HEK293 (cell line): ENCODE measurements at regions of chr2 and their contacts with region 1.

Region 1: GRCh38 chr2:134453476-134453875 is 199.6 kb downstream of the MGAT5 start:
- H3K4me3 ChIP-seq: no peak overlapping the region
- H3K27ac ChIP-seq: no peak overlapping the region
- H3K4me1 ChIP-seq: no peaks in the 10 kb centered on the region
- CTCF ChIP-seq: no peak

Region 2: GRCh38 chr2:133886735-133887660 is 566.5 kb before region 1 on chr2:
- CTCF ChIA-PET with region 1: interaction called, 19 read pairs
- POLR2A ChIA-PET with region 1: no interaction called
- H3K4me3 ChIP-seq: no peak overlapping the region
- H3K27ac ChIP-seq: no peak overlapping the region
- H3K4me1 ChIP-seq: no peaks in the 10 kb centered on the region; the same call in 1 of the 2 replicates
- CTCF ChIP-seq: peak; percentile 43; the same call in 1 of the 2 replicates

Region 3: DNA sequence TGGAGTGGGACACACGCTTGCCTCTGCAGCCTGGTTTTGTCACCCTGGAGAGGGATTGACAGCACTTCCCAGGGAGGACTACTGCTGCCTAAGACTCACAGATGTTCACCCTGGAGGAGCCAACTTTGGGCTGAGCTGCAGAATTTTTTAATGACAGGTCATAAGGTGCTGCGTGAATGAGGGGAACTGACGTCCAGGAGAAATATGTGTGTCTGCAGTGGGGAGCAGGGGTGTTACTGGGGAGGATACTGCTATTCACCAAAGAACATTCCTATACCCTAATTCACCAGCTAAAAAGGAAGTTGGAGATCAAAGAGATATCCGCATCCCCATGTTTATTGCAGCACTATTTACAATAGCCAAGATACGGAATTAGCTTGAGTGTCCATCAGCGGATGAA is 55.2 kb before region 1 on chr2:
- CTCF ChIA-PET with region 1: no interaction called
- POLR2A ChIA-PET with region 1: no interaction called
- H3K4me3 ChIP-seq: no peak overlapping the region
- H3K27ac ChIP-seq: no peak overlapping the region
- H3K4me1 ChIP-seq: no peaks in the 10 kb centered on the region
- CTCF ChIP-seq: no peak

Region 4: GRCh38 chr2:134411828-134412638 is 41.4 kb before region 1 on chr2:
- CTCF ChIA-PET with region 1: interaction called, 15 read pairs
- POLR2A ChIA-PET with region 1: no interaction called
- H3K4me3 ChIP-seq: no peak overlapping the region
- H3K27ac ChIP-seq: no peak overlapping the region
- H3K4me1 ChIP-seq: peaks cover 13% of the 10 kb centered on the region
- CTCF ChIP-seq: peak; percentile 83

Region 5: DNA sequence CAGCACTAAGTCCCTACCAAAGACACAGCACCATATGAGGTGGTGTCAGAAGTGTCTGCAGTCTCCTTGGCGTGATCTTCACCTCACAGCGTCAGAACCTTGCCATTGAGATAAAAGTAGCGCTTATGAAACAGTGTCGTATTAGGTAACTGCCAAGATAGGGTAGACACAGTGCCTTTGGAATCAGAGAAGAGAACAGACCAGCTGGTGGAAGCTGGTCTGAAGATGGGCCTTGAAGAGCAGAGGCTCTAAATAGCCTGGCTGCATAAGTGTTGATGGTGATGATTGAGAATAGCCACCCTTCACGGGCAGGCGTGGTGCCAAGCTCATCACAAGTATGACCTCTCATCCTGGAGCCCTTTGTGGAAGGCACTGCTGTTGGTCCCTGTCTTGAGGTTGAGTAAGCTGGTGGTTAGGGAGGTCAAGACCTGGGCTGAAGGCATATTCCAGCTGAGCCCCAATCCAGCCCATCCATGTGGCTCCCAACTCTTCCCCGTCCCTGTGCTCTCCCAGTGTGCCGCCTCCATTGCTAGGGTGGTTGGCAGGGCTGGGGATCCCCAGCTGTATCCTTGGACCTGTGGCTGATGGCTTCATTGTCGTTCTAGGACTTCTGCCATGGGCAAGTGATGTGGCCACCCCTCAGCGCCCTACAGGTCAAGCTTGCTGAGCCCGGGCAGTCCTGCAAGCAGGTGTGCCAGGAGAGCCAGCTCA is 12.2 kb before region 1 on chr2:
- CTCF ChIA-PET with region 1: interaction called, 19 read pairs
- POLR2A ChIA-PET with region 1: no interaction called
- H3K4me3 ChIP-seq: no peak overlapping the region
- H3K27ac ChIP-seq: no peak overlapping the region
- H3K4me1 ChIP-seq: no peaks in the 10 kb centered on the region
- CTCF ChIP-seq: no peak

Region 6: GRCh38 chr2:134845719-134846118 is 392.2 kb after region 1 on chr2:
- CTCF ChIA-PET with region 1: interaction called, 10 read pairs
- POLR2A ChIA-PET with region 1: no interaction called
- H3K4me3 ChIP-seq: no peak overlapping the region
- H3K27ac ChIP-seq: no peak overlapping the region
- H3K4me1 ChIP-seq: no peaks in the 10 kb centered on the region
- CTCF ChIP-seq: no peak

Region 7: DNA sequence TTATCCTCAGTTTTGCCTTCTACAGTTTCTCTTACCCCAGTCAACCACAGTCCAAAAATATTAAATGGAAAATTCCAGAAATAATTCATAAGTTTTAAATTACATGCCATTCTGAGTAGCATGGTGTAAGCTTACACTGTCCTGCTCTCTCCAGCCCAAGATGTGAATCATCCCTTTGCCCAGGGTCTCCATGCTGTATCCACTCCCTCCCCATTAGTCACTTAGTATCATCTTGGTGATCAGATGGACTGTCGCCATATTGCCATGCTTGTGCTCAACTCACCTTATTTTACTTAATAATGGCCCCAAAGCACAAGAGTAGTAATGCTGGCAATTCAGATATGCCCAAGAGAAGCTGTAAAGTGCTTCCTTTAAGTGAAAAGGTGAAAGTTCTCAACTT is 446.7 kb after region 1 on chr2:
- CTCF ChIA-PET with region 1: interaction called, 11 read pairs
- POLR2A ChIA-PET with region 1: no interaction called
- H3K4me3 ChIP-seq: no peak overlapping the region
- H3K27ac ChIP-seq: no peak overlapping the region
- H3K4me1 ChIP-seq: no peaks in the 10 kb centered on the region
- CTCF ChIP-seq: no peak